ENCODE measurements at regions of chr10 and their contacts with region 1.

Region 1: GRCh38 chr10:63562857-63563256 is 41.7 kb downstream of the REEP3 start:
- DNase-seq: no peak
- ATAC-seq: no peak
- H3K4me3 ChIP-seq: no peak overlapping the region
- H3K27ac ChIP-seq: no peak overlapping the region
- H3K4me1 ChIP-seq: peaks cover 0 to 10% (median 0%) of the 10 kb centered on the region in 9 donors
- H3K27me3 ChIP-seq: no peaks in the 10 kb centered on the region
- CTCF ChIP-seq: no peak

Region 2: GRCh38 chr10:63536698-63537097 is 26.2 kb before region 1 on chr10:
- intact Hi-C with region 1: loop called in 1 of 10 experiments (anchors 1 kb)
- DNase-seq: no peak
- ATAC-seq: no peak
- H3K4me3 ChIP-seq: no peak overlapping the region
- H3K27ac ChIP-seq: no peak overlapping the region
- H3K4me1 ChIP-seq: peaks cover 0 to 18% (median 7%) of the 10 kb centered on the region in 9 donors
- H3K27me3 ChIP-seq: no peaks in the 10 kb centered on the region
- CTCF ChIP-seq: no peak

Region 3: GRCh38 chr10:63579371-63580014 is 16.6 kb after region 1 on chr10:
- intact Hi-C with region 1: no loop called
- DNase-seq: no peak
- ATAC-seq: peak in 1 of 8 donors; percentile 47
- H3K4me3 ChIP-seq: no peak overlapping the region
- H3K27ac ChIP-seq: peak overlapping the region in 4 of 10 donors; percentile 1 to 32 (median 15)
- H3K4me1 ChIP-seq: peaks cover under 1 to 57% (median 30%) of the 10 kb centered on the region in 9 donors
- H3K27me3 ChIP-seq: no peaks in the 10 kb centered on the region
- CTCF ChIP-seq: no peak

Measured in heart right ventricle (tissue), 16 donors.